Activated CD8-positive, alpha-beta T cell treated with anti-CD3 and anti-CD28 coated beads, Interleukin-2, amount 10 ng/mL, durations not matched to agents 7 days and 5 days (primary cell): ENCODE measurements at regions of chr9 and their contacts with region 1.

Region 1: DNA sequence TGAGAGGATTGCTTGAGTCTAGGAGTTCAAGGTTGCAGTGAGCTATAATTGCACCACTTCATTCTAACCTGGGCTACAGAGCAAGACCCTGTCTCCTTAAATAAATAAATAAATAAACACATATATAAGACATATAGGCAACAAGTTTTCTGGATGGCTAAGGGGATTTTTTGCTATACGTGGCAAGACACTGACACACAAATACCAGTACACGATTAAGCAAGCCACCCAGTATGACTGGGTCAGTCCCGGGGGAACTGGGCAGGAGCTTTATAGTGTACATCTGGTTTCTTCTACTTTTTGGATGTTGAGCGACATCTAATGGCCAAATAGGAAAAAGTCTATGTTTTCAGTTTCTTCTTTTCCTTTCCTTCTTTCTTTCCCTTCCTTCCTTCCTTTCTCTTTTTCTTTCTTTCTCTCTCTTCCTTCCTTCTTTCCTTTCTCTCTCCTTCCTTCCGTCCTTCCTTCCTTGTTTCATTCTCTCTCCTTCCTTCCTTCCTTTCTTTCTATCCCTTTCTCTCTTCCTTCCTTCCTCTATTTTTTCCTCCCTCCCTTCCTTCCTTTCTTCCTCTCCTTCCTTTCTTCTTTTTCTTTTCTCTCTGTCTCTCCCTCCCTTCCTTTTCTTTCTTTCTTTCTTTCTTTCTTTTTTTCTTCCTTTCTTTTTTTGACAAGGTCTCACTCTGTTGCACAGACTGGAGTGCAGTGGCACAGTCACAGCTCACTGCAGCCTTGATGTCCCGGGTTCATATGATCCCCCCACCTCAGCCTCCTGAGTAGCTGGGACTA is 47.0 kb upstream of the PLIN2 start:
- DNase-seq: peak; percentile 52
- ATAC-seq: peak; percentile 87
- H3K4me3 Mint-ChIP-seq: no peak overlapping the region
- H3K27ac Mint-ChIP-seq: peak overlapping the region; percentile 57
- H3K4me1 Mint-ChIP-seq: peaks cover 36% of the 10 kb centered on the region
- H3K27me3 Mint-ChIP-seq: no peaks in the 10 kb centered on the region

Region 2: DNA sequence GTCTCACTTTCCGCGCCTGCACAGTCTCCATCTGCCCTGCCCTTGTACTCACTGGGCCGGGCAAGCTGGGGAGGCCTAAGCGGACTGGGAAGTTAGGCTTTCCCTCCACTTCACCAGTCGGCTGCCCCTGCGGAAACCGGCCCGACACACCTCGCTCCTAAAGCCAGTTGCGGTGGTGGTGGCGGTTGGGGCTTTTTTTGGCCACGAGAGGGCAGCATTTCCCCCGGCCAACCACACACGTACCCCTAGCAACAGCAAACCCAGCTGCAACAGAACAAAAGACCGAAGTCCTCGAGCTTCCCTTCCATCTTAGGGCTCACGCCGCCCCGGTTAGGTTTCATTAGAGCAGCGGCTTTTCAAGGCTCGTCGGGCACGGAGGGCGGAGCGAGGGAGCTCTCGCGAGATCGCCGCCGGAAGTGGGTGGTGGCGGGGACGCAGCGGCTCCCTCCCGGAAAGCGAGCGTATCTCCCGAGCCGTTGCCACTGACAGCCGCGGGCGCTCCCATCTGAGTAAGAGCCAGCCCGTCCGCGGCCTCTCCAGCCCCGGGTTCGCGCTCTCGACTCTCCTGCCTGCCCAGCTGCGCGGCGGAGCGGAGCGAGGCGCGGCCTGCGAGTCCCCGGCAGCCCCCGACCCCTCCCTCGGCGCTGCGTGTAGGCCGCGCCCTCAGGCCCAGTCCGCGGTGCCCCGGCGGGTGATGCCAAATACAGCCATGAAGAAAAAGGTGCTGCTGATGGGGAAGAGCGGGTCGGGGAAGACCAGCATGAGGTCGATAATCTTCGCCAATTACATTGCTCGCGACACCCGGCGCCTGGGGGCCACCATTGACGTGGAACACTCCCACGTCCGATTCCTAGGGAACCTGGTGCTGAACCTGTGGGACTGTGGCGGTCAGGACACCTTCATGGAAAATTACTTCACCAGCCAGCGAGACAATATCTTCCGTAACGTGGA is 125.1 kb before region 1 on chr9 and contains the start of gene RRAGA:
- CTCF ChIA-PET with region 1: interaction called, 20 read pairs
- POLR2A ChIA-PET with region 1: interaction called, 17 read pairs
- DNase-seq: peak; percentile 95
- ATAC-seq: peak; percentile 92
- H3K4me3 Mint-ChIP-seq: peak within 1 kb of the TSS; percentile 90
- H3K27ac Mint-ChIP-seq: peak within 1 kb of the TSS; percentile 99
- H3K4me1 Mint-ChIP-seq: peaks cover 30% of the 10 kb centered on the region
- H3K27me3 Mint-ChIP-seq: no peaks in the 10 kb centered on the region
- total RNA-seq, gene RRAGA: 44.7 to 46.0 TPM

Region 3: DNA sequence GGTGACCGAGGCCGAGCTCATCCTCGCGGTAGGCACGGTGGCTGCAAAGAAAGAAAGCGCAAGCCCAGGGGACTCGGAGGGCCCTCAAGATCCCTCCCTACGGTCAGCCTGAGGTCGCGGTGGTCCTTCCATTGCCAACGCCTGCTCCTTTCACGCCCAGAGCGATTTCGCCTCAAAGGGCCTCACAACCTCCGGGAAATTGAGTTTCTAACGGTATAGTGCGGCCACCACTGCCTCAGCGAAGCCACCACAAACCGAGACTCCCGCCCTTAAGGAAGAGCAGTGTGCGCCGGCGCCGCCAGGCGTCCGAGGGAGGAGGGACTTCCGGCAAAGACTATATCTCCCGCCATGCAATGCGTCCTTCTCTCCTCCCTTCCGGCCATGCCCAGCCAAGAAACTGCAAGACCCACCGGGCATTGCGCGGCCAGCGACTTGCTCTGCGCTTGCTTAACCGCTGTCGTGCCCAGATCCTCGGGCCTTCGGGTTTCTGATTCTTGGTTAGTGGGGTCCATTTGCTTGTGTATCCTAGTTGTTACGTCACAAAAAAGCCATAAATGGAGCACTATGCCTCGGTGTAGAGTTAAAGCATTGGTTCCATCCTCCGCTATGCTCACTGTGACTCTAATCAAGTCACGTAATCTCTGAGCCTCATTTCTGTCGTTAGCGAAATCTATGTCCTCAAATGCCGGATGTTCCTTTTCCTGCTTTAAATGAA is 71.5 kb before region 1 on chr9 and contains the start of gene HAUS6:
- CTCF ChIA-PET with region 1: interaction called, 14 read pairs
- POLR2A ChIA-PET with region 1: interaction called, 3 read pairs
- DNase-seq: peak; percentile 98
- ATAC-seq: peak; percentile 92
- H3K4me3 Mint-ChIP-seq: peak within 1 kb of the TSS; percentile 96
- H3K27ac Mint-ChIP-seq: peak within 1 kb of the TSS; percentile 96
- H3K4me1 Mint-ChIP-seq: peaks cover 26% of the 10 kb centered on the region
- H3K27me3 Mint-ChIP-seq: no peaks in the 10 kb centered on the region
- total RNA-seq, gene HAUS6: 29.2 to 30.8 TPM

Region 4: GRCh38 chr9:19122490-19123042 is 51.8 kb before region 1 on chr9:
- CTCF ChIA-PET with region 1: interaction called, 25 read pairs
- POLR2A ChIA-PET with region 1: no interaction called
- DNase-seq: no peak
- ATAC-seq: no peak
- H3K4me3 Mint-ChIP-seq: no peak overlapping the region
- H3K27ac Mint-ChIP-seq: no peak overlapping the region
- H3K4me1 Mint-ChIP-seq: peaks cover 40% of the 10 kb centered on the region
- H3K27me3 Mint-ChIP-seq: no peaks in the 10 kb centered on the region

Region 5: GRCh38 chr9:19137282-19137681 is 37.0 kb before region 1 on chr9:
- CTCF ChIA-PET with region 1: interaction called, 25 read pairs
- POLR2A ChIA-PET with region 1: no interaction called
- DNase-seq: no peak
- ATAC-seq: no peak
- H3K4me3 Mint-ChIP-seq: no peak overlapping the region
- H3K27ac Mint-ChIP-seq: no peak overlapping the region
- H3K4me1 Mint-ChIP-seq: peaks cover 10% of the 10 kb centered on the region
- H3K27me3 Mint-ChIP-seq: no peaks in the 10 kb centered on the region

Region 6: DNA sequence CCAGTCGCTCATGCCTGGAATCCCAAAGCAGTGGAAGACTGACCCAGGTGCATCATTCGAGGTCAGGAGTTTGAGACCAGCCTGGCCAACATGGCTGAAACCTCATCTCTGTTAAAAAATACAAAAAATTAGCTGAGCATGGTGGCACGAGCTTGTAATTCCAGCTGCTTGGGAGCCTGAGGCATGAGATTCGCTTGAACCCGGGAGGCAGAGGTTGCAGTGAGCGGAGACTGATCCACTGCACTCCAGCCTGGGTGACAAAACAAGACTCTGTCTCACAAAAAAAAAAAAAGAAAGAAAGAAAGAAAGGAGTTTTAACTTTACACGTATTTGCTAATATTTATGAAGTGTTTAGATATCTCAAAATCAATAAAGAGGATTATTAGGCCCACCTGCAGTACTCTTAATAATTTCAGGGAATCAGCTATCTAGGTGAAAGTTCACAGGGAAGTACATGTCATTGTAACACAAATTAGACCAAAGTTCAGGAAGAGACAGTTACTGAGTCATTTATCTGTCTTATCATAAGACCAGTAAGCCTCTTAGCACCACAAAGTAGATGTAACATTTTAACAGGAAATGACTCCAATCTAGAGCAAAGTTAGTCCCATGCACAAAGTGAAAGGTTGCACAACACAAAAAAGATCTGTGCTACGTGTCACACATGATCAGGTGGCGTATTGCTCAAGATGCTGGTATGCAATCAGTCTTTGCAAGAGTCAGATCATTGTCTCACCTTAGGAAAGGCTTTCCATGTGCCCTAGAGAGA is 12.9 kb before region 1 on chr9:
- CTCF ChIA-PET with region 1: interaction called, 32 read pairs
- POLR2A ChIA-PET with region 1: no interaction called
- DNase-seq: peak; percentile 74
- ATAC-seq: peak; percentile 98
- H3K4me3 Mint-ChIP-seq: peak overlapping the region; percentile 32
- H3K27ac Mint-ChIP-seq: peak overlapping the region; percentile 87
- H3K4me1 Mint-ChIP-seq: peaks cover 24% of the 10 kb centered on the region
- H3K27me3 Mint-ChIP-seq: no peaks in the 10 kb centered on the region

Region 7: DNA sequence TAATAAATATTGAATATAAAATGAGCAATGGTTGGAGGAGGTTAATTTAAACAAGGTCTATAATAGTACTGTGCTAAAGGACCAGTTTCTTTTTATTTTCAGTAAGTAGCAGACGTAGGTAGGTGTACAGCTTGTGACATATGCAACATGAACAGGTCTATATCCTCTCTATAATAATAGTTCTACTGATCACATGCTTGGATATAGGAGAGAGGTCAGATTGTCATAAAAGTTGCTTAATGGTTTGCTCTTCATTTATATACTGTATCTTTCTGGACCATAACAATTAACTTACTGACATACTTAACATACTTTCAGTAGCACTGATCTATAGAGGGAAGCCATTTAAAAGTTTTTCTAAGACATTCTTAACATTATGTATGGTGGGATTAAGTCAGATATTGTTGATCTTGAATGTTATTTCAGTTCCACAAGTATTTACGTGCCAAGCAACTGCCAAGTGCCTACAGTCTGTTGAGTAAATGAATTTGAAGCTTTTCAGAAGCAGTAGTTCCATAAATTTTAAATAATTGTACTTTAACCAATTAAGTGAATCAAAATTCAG is 124.2 kb after region 1 on chr9:
- CTCF ChIA-PET with region 1: no interaction called
- POLR2A ChIA-PET with region 1: no interaction called
- DNase-seq: no peak
- ATAC-seq: no peak
- H3K4me3 Mint-ChIP-seq: no peak overlapping the region
- H3K27ac Mint-ChIP-seq: no peak overlapping the region
- H3K4me1 Mint-ChIP-seq: no peaks in the 10 kb centered on the region
- H3K27me3 Mint-ChIP-seq: no peaks in the 10 kb centered on the region

Region 8: DNA sequence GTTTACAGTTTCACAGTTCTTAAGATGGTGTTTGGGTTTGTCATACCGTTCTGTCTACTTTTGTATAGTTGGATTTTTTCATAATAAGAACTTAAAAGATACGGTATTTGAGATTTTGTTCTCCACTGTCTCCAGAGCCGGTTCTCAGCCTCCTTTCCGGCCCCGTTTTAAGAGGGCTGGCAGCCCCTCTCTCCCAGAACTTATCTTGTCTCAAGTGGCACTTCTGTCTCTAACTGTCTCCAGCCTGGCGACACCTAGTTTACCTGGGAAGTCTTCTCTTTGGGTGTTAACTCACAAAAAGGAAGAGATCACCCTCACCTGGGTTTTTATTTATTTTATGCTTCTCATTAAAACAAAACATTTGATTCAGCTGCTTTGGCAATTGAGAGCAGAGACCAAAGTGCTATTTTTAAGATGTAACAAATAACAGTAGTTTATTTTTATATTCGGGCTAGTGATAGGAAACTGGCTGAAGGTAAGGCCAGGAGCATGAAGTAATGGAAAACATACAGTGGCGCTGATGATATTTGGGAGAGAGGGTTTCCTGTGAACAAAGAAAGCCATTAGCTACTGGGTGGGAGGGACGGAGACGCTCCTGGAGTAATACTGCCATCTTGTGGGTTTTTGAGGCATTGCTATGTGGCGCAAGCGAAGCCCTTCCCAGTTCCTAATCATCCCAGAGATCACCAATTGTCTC is 282.8 kb after region 1 on chr9:
- CTCF ChIA-PET with region 1: interaction called, 19 read pairs
- POLR2A ChIA-PET with region 1: no interaction called
- DNase-seq: peak; percentile 75
- ATAC-seq: peak; percentile 85
- H3K4me3 Mint-ChIP-seq: peak overlapping the region; percentile 31
- H3K27ac Mint-ChIP-seq: no peak overlapping the region
- H3K4me1 Mint-ChIP-seq: peaks cover 16% of the 10 kb centered on the region
- H3K27me3 Mint-ChIP-seq: peaks cover 2% of the 10 kb centered on the region